Stomach (tissue), 19 donors: ENCODE measurements at regions of chr17 and their contacts with region 1.

Region 1: DNA sequence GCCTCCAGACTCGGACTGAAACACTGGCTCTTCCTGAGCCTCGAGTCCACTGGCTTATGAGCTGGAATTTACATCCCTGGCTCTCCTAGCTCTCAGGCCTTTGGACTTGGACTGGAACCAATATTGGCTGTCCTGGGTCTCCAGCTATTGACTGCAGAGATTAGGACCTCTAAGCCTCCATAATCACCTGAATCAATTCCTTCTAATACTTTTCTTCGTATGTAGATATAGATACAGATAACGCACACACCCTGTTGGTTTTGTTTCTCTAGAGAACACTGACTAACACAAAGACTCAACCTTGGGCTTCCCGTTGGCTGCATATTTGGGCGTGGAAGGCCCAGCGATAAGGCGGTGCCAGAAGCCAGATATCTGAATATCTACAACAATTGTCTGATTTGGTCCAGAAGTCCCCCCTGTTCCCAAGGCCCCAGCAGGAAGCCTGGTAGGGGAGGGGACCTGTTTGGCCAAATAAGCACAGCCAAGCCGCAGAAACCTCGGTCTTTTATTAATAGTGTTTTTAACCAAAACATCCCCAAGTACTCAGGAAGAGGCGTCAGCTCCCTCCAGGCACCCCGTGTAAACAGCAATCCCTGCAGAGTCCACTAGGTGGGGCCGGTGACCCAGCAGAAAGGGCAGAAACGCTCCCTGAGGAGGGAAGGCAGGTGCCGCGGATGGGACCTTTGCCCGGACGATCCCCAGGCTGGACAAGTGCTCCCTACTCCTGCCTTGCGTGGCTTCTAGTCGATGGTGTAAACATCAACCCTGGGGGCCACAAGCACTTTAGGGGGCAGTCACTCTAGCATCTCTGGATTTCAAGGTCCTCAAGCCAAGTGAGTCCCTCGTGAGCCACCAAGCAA is 57.0 kb downstream of the ABR start:
- DNase-seq: peak; percentile 90 to 93
- H3K4me3 ChIP-seq: no peak overlapping the region
- H3K27ac ChIP-seq: peak overlapping the region; percentile 40 to 79 (median 70)
- H3K4me1 ChIP-seq: peaks cover 20 to 34% (median 30%) of the 10 kb centered on the region in 4 donors
- H3K27me3 ChIP-seq: no peaks in the 10 kb centered on the region
- CTCF ChIP-seq: peak in 6 of 7 experiments; percentile 60 to 94 (median 86)
- EP300 ChIP-seq: no peak
- POLR2A ChIP-seq: no peak

Region 2: DNA sequence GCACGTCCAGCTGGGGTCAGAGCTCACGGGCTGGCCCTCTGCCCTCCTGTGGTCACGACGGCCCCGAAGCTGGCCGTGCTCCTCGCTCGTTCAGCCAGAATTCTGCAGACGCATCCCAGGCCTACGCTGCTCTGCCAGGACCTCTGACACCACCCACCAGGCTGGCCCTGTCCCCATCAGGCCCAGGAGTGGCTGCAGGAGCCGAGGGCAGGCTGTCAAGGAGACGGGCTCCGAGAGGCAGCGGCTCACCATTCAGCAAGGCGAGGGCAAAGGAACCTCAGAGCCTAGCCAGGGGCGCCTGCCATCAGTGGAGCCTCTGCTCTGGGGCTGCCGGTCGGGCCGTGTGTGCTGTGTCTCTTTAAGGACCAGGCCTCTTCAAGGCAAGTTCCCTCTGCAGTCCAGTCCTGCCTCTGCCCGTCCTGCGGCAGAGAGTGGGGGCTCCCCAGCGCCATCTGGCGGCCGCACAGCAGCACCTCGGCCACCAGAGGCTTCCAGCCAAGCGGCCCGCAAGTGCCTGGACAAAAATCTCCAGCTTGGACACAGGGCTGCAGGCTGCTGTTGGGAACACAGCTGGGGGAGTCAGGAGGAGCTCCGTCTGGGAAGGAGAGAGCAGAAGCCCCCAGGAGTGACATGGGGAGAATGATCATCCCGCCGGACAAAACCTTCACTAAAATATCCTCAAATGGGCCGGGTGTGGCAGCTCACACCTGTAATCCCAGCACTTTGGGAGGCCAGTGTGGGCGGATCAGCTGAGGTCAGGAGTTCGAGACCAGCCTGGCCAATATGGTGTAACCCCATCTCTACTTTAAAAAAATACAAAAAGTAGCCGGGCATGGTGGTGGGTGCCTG is 64.4 kb after region 1 on chr17:
- intact Hi-C with region 1: loop called (anchors 10 kb)
- DNase-seq: peak; percentile 86 to 95
- H3K4me3 ChIP-seq: peak overlapping the region; percentile 19 to 27 (median 24)
- H3K27ac ChIP-seq: peak overlapping the region; percentile 45 to 79 (median 63)
- H3K4me1 ChIP-seq: peaks cover 35 to 60% (median 50%) of the 10 kb centered on the region in 4 donors
- H3K27me3 ChIP-seq: no peaks in the 10 kb centered on the region
- CTCF ChIP-seq: peak in 6 of 7 experiments; percentile 43 to 97 (median 96)
- EP300 ChIP-seq: no peak
- POLR2A ChIP-seq: no peak